A549 (cell line): ENCODE measurements at regions of chr15 and their contacts with region 1.

Region 1: DNA sequence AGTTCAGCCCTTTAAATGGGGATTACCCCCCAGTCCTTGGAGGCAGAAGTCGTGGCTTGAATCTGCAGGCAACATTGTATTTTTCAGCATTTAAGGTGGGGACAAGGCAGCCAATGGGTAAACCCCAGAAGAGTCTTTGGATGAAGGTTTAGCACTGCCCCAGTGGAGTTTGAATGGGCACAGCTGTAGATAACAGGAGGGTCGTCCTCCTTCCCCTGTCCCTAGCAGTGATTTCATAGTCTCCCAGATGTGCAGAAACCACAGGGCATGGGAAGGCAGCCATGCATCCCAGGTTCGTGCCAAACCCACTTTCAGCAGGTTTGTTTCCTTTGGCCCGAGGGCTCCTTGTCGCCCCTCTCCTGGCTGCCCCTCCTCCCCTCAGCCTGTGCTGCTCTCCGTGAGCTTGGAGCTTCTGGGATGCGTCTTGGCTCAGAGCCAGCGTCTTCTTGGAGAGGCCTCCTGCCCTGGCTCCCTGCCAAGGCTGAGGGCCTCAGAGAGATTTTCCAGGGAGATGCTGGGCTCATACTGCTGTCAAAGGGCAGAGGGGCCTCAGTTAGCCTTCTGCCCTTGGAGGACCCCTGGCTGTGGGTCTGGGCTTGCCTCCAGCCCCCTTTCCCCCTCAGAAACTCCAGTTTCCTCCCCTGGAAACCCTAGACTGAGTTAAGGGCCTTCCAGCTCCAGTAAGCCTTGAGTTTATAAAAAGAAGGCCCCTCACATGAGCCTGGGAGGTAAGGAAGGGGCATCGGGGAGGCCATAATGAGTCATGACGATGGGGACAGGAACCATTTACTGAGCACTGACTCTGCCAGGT is 48.9 kb upstream of the POLG start:
- DNase-seq: peak in 1 of 2 experiments; percentile 56
- ATAC-seq: peak in 1 of 2 experiments; percentile 21; a peak in 2 of 6 replicates
- H3K4me3 ChIP-seq: no peak overlapping the region
- H3K27ac ChIP-seq: no peak overlapping the region
- H3K4me1 ChIP-seq: peaks cover 10% of the 10 kb centered on the region; the same call in 2 of the 3 replicates
- CTCF ChIP-seq: no peak
- EP300 ChIP-seq: no peak
- POLR2A ChIP-seq: no peak
- RAD21 ChIP-seq: no peak

Region 2: DNA sequence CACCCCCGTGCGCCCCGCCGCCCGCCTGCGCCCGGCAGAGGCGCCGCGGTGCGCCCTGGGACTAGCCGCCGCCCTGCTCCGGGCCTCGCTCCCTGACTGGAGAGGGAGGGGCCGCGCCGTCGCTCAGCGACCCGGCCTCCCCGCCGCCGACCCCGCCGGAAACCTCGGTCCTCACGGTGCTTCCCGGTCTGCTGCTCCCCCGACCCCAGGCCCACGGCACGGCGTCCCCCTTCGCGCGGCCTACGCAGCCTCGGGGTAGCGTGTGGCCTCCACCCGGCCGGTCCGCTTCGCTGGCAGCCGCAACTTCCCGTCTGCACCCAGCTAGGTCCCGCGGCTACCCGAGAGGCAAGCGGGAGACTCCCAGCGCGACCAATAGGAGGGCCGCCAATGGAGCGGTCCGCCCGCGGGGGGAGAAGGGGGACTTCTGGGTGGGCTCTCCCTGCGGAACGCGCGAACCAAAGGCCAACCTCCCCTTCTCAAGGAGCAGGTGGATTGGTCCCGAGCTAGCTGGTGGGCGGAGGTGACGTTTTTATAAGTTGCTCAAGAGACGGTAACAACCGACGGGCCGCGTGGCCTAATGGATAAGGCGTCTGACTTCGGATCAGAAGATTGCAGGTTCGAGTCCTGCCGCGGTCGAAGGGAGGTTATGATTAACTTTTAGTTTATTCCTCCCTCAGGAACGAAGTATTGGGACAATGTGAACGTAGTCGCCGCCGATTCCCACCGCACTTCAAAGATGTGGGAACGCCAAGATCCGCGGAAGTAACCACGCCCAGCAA is 48.9 kb before region 1 on chr15 and contains the start of gene POLG:
- CTCF ChIA-PET with region 1: no interaction called
- POLR2A ChIA-PET with region 1: no interaction called
- DNase-seq: peak; percentile 96 to 100
- ATAC-seq: peak; percentile 80 to 94
- H3K4me3 ChIP-seq: peak within 1 kb of the TSS; percentile 68
- H3K27ac ChIP-seq: peak within 1 kb of the TSS; percentile 89 to 95
- H3K4me1 ChIP-seq: peaks cover 37% of the 10 kb centered on the region
- CTCF ChIP-seq: no peak
- EP300 ChIP-seq: no peak
- POLR2A ChIP-seq: peak; percentile 99
- RAD21 ChIP-seq: no peak
- polyA plus RNA-seq, gene POLG: 24.1 and 34.0 TPM in 2 replicates

Region 3: DNA sequence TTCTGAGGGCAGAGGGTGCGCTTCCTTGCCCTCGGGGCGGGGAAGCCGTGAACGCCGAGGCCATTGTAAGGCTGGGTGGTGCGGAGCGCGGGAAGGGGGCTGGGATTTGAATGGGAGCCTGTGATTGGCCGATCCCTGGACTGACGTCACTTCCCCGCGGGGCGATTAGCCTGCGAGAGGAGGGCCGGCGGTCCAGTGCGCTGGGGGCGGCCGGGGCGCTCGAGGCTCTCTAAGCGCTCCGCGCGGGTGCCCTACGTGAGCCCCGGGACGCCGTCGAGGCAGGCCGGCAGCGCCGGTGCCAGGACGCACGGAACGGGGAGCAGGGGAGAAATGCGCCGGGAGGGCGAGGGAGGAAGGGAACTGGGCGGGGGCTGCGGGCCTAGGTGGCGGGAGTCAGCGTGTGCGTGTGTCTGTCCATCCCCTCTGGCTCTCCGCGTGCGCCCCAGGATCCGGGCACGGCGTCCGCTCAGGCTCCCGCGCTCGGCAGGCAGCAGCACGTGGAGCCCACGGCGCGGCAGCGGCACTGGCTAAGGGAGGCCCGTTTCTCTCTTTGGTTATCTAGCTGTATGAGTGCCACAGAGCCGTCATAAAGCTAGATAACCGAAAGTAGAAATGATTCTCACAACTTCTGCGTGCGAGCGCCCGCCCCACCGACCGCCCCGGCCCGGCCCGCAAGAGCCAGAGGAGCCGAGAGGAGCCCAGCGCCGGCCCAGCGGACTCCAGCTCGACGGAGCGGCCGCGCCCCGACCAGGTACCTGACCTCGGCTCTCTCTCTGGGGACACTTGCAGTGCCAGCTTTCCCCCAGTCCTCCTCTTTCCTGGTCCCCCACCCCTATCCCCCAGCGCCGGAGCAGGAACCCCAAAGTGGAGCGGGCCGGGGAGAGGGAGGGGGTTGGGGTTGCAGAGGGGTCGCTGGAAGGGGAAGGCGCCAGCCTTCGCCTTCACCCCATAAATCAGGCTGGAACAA is 15.8 kb before region 1 on chr15:
- CTCF ChIA-PET with region 1: interaction called, 494 read pairs
- POLR2A ChIA-PET with region 1: no interaction called
- DNase-seq: peak; percentile 64 to 78
- ATAC-seq: peak; percentile 20 to 70; a peak in 4 of 6 replicates
- H3K4me3 ChIP-seq: peak overlapping the region; percentile 53
- H3K27ac ChIP-seq: peak overlapping the region; percentile 32 to 62; a peak in 4 of 6 replicates
- H3K4me1 ChIP-seq: peaks cover 9% of the 10 kb centered on the region; the same call in 2 of the 3 replicates
- CTCF ChIP-seq: no peak
- EP300 ChIP-seq: no peak
- POLR2A ChIP-seq: no peak
- RAD21 ChIP-seq: no peak